GM12878 (cell line): ENCODE measurements at regions of chr7 and their contacts with region 1.

Region 1: GRCh38 chr7:20310963-20311742 is 19.5 kb upstream of the ITGB8 start:
- DNase-seq: peak; percentile 61
- ATAC-seq: peak; percentile 64
- H3K4me3 ChIP-seq: no peak overlapping the region
- H3K27ac ChIP-seq: no peak overlapping the region
- H3K4me1 ChIP-seq: peaks cover 4% of the 10 kb centered on the region; the same call in 1 of the 2 replicates
- H3K27me3 ChIP-seq: no peaks in the 10 kb centered on the region
- CTCF ChIP-seq: peak; percentile 16 to 62 (median 39); a peak in 4 of 6 replicates
- EP300 ChIP-seq: no peak
- POLR2A ChIP-seq: no peak
- RAD21 ChIP-seq: peak; percentile 79

Region 2: DNA sequence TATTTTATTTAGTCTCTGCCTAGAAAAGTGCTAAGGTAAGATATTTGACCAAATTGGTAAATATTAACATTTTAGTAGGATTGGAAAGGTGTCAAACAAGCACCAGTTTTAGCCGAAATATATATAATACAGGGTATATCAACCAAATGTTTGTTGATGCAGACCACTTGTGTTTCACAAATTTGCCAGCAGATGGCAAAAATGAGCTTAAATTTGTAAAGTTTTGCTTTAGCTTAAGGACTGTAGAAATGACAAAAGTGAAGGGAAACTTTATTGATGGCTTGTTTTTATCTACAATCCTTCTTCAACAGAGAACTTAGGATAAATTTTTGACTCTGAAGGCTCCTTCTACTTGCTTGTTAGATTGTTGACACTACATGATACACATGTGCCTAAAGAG is 597.5 kb before region 1 on chr7:
- CTCF ChIA-PET with region 1: interaction called, 5 read pairs
- POLR2A ChIA-PET with region 1: no interaction called
- RAD21 ChIA-PET with region 1: interaction called, 8 read pairs
- SMC1A ChIA-PET with region 1: interaction called, 4 read pairs
- in situ Hi-C with region 1: no loop called
- intact Hi-C with region 1: loop called (anchors 5 kb)
- DNase-seq: peak; percentile 8
- ATAC-seq: peak; percentile 38
- H3K4me3 ChIP-seq: no peak overlapping the region
- H3K27ac ChIP-seq: no peak overlapping the region
- H3K4me1 ChIP-seq: no peaks in the 10 kb centered on the region
- H3K27me3 ChIP-seq: no peaks in the 10 kb centered on the region; a peak in 1 of 4 replicates
- CTCF ChIP-seq: peak; percentile 46 to 59 (median 49); a peak in 5 of 6 replicates
- EP300 ChIP-seq: no peak
- POLR2A ChIP-seq: no peak
- RAD21 ChIP-seq: peak; percentile 48; the same call in 1 of the 2 replicates

Region 3: GRCh38 chr7:20114468-20114867 is 196.7 kb before region 1 on chr7:
- CTCF ChIA-PET with region 1: interaction called, 12 read pairs
- POLR2A ChIA-PET with region 1: interaction called, 3 read pairs
- RAD21 ChIA-PET with region 1: interaction called, 19 read pairs
- SMC1A ChIA-PET with region 1: interaction called, 13 read pairs
- in situ Hi-C with region 1: no loop called
- intact Hi-C with region 1: no loop called
- DNase-seq: peak; percentile 62
- ATAC-seq: peak; percentile 91
- H3K4me3 ChIP-seq: no peak overlapping the region
- H3K27ac ChIP-seq: no peak overlapping the region
- H3K4me1 ChIP-seq: peaks cover 21% of the 10 kb centered on the region
- H3K27me3 ChIP-seq: no peaks in the 10 kb centered on the region
- CTCF ChIP-seq: no peak; a peak in 1 of 6 replicates
- EP300 ChIP-seq: no peak
- POLR2A ChIP-seq: no peak
- RAD21 ChIP-seq: 0 out of 2 replicates have a peak, but pooled peaks have one; percentile 11

Region 4: DNA sequence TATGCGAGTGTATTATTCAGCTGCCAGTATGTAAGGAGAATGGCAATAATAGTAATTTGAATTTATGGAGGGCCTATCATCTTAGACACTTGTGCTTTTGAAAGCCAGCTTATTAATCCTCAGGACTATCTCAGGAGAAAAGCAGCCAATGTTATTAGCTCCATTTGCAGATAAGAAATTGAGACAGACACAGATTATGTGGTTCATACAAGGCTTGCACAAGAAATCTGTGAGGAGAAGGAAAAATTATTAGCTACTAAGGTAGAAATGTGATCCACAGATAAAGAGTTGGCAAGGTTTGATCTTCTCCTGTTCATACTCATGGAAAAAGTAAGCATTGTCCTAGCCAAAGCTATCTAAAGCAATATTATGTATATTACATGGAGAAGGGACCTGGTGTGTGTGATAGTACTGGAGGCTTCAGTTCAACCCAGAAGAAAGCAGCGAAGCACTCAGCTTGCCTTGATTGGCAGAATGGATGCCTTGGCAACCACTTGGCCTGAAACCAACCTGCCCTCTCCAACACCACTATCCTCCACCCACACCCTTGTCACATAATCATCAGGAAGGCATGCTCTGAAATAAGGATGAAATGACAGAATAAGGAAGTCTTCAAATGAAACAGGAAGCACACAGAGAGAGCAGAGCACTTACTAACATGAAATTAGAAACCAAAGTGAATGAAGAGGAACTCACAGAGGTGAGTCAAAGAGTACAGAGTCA is 112.0 kb before region 1 on chr7:
- CTCF ChIA-PET with region 1: interaction called, 49 read pairs
- POLR2A ChIA-PET with region 1: interaction called, 4 read pairs
- RAD21 ChIA-PET with region 1: interaction called, 57 read pairs
- SMC1A ChIA-PET with region 1: interaction called, 23 read pairs
- in situ Hi-C with region 1: no loop called
- intact Hi-C with region 1: loop called (anchors 1 kb)
- DNase-seq: peak; percentile 94
- ATAC-seq: peak; percentile 77
- H3K4me3 ChIP-seq: no peak overlapping the region; the same call in 1 of the 2 replicates
- H3K27ac ChIP-seq: peak overlapping the region; percentile 3; the same call in 1 of the 2 replicates
- H3K4me1 ChIP-seq: peaks cover 25% of the 10 kb centered on the region
- H3K27me3 ChIP-seq: no peaks in the 10 kb centered on the region
- CTCF ChIP-seq: no peak
- EP300 ChIP-seq: peak in 1 of 2 experiments; percentile 32; a peak in 1 of 4 replicates
- POLR2A ChIP-seq: no peak
- RAD21 ChIP-seq: no peak

Region 5: DNA sequence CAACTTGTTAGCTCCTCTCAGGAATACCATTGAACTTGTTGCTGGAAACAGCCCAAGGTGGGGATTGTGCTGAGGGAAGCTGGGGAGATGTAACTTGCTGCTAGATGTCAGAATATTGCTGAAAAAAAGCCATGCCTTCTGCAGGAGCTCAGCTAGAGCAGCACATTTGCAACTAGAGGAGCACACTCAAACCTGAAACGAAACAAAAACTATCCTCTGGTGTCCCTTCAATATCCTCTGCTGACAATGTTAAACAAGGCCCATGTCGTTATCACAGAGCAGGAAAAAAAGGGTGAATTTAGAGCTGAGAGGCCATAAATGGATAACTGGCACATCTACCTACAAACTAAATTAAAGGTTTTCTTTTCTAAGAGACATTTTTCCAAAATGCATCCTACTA is 40.3 kb before region 1 on chr7:
- CTCF ChIA-PET with region 1: interaction called, 7 read pairs
- POLR2A ChIA-PET with region 1: interaction called, 7 read pairs
- RAD21 ChIA-PET with region 1: interaction called, 11 read pairs
- SMC1A ChIA-PET with region 1: interaction called, 12 read pairs
- in situ Hi-C with region 1: no loop called
- intact Hi-C with region 1: no loop called
- DNase-seq: peak; percentile 74
- ATAC-seq: peak; percentile 90
- H3K4me3 ChIP-seq: no peak overlapping the region
- H3K27ac ChIP-seq: peak overlapping the region; percentile 73
- H3K4me1 ChIP-seq: peaks cover 17% of the 10 kb centered on the region
- H3K27me3 ChIP-seq: no peaks in the 10 kb centered on the region
- CTCF ChIP-seq: no peak
- EP300 ChIP-seq: no peak
- POLR2A ChIP-seq: no peak
- RAD21 ChIP-seq: no peak

Region 6: GRCh38 chr7:20323595-20323994 is 12.4 kb after region 1 on chr7:
- CTCF ChIA-PET with region 1: interaction called, 91 read pairs
- POLR2A ChIA-PET with region 1: interaction called, 14 read pairs
- RAD21 ChIA-PET with region 1: interaction called, 54 read pairs
- SMC1A ChIA-PET with region 1: interaction called, 129 read pairs
- in situ Hi-C with region 1: no loop called
- intact Hi-C with region 1: no loop called
- DNase-seq: no peak
- ATAC-seq: no peak
- H3K4me3 ChIP-seq: no peak overlapping the region
- H3K27ac ChIP-seq: no peak overlapping the region
- H3K4me1 ChIP-seq: peaks cover 7% of the 10 kb centered on the region
- H3K27me3 ChIP-seq: no peaks in the 10 kb centered on the region
- CTCF ChIP-seq: no peak
- EP300 ChIP-seq: no peak
- POLR2A ChIP-seq: no peak
- RAD21 ChIP-seq: no peak